Panc1 (cell line): ENCODE measurements at regions of chr4 and their contacts with region 1.

Region 1: GRCh38 chr4:139887962-139888735 is 222.5 kb downstream of the MGST2 start:
- DNase-seq: no peak
- ATAC-seq: no peak
- H3K4me3 ChIP-seq: no peak overlapping the region
- H3K27ac ChIP-seq: no peak overlapping the region
- H3K4me1 ChIP-seq: peaks cover 12% of the 10 kb centered on the region
- H3K27me3 ChIP-seq: no peaks in the 10 kb centered on the region
- CTCF ChIP-seq: no peak

Region 2: GRCh38 chr4:139619644-139620043 is 268.5 kb before region 1 on chr4:
- CTCF ChIA-PET with region 1: no interaction called
- POLR2A ChIA-PET with region 1: no interaction called
- in situ Hi-C with region 1: no loop called
- intact Hi-C with region 1: no loop called
- DNase-seq: no peak
- ATAC-seq: peak; percentile 86
- H3K4me3 ChIP-seq: no peak overlapping the region
- H3K27ac ChIP-seq: no peak overlapping the region
- H3K4me1 ChIP-seq: no peaks in the 10 kb centered on the region
- H3K27me3 ChIP-seq: no peaks in the 10 kb centered on the region
- CTCF ChIP-seq: peak; percentile 63

Region 3: GRCh38 chr4:139783741-139784484 is 104.2 kb before region 1 on chr4:
- CTCF ChIA-PET with region 1: interaction called, 11 read pairs
- POLR2A ChIA-PET with region 1: interaction called, 4 read pairs
- in situ Hi-C with region 1: no loop called
- intact Hi-C with region 1: no loop called
- DNase-seq: no peak
- ATAC-seq: no peak
- H3K4me3 ChIP-seq: no peak overlapping the region
- H3K27ac ChIP-seq: no peak overlapping the region
- H3K4me1 ChIP-seq: no peaks in the 10 kb centered on the region
- H3K27me3 ChIP-seq: no peaks in the 10 kb centered on the region
- CTCF ChIP-seq: no peak

Region 4: GRCh38 chr4:139841464-139842246 is 46.5 kb before region 1 on chr4:
- CTCF ChIA-PET with region 1: no interaction called
- POLR2A ChIA-PET with region 1: no interaction called
- in situ Hi-C with region 1: no loop called
- intact Hi-C with region 1: no loop called
- DNase-seq: no peak
- ATAC-seq: no peak
- H3K4me3 ChIP-seq: no peak overlapping the region
- H3K27ac ChIP-seq: no peak overlapping the region
- H3K4me1 ChIP-seq: no peaks in the 10 kb centered on the region
- H3K27me3 ChIP-seq: no peaks in the 10 kb centered on the region
- CTCF ChIP-seq: no peak